BJ (cell line): ENCODE measurements at regions of chr6 and their contacts with region 1.

Region 1: DNA sequence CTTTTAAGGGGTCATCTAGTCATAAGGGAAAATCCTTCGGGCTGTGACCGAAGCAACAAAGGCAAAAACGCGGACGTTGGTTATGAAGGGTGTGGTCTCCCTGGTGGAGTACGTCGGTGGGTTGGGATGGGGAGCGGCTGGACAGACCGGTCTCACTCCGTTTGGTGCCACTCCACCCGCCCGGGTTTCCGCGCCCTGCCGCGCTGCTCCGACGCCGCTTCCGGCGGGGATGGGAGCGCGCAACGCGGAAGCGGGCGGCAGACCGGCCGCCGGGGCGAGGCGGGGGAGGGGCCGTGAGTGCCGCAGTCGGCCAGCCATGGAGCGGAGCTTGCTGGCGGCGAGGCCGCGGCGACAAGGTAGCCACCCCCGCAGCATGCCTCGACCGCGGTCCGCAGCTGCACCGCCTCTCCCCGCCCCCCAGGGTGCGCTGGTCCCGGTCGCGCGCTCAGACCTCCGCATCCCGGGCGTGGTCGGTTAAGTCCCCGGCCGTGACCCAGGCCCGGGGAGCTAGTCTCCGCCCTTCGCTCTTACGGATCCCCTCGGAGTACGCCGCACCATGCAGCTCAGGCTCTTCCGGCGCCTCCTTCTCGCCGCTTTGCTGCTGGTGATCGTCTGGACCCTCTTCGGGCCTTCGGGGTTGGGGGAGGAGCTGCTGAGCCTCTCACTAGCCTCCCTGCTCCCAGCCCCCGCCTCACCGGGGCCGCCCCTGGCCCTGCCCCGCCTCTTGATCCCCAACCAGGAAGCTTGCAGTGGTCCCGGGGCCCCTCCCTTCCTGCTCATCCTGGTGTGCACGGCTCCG is at the start of gene B3GALT4:
- DNase-seq: no peak
- H3K4me3 ChIP-seq: peak within 1 kb of the TSS; percentile 49
- H3K27me3 ChIP-seq: no peaks in the 10 kb centered on the region
- CTCF ChIP-seq: peak; percentile 39; the same call in 1 of the 2 replicates
- polyA plus RNA-seq, gene B3GALT4: 2.2 and 4.0 TPM in 2 replicates

Region 2: GRCh38 chr6:33040157-33040556 is 236.9 kb before region 1 on chr6:
- CTCF ChIA-PET with region 1: no interaction called
- POLR2A ChIA-PET with region 1: no interaction called
- DNase-seq: no peak
- H3K4me3 ChIP-seq: no peak overlapping the region
- H3K27me3 ChIP-seq: peaks cover 4% of the 10 kb centered on the region; the same call in 1 of the 2 replicates
- CTCF ChIP-seq: no peak

Region 3: GRCh38 chr6:33288921-33289748 is 12.1 kb after region 1 on chr6 and contains the starts of genes PFDN6 and WDR46:
- CTCF ChIA-PET with region 1: interaction called, 21 read pairs
- POLR2A ChIA-PET with region 1: interaction called, 4 read pairs
- DNase-seq: peak; percentile 80
- H3K4me3 ChIP-seq: peak within 1 kb of the TSS; percentile 64
- H3K27me3 ChIP-seq: no peaks in the 10 kb centered on the region
- CTCF ChIP-seq: no peak
- polyA plus RNA-seq, gene PFDN6: 49.0 and 55.5 TPM in 2 replicates
- polyA plus RNA-seq, gene WDR46: 45.6 and 78.9 TPM in 2 replicates